ENCODE measurements at regions of chr6 and their contacts with region 1.

Region 1: GRCh38 chr6:130961148-130961547 is 101.9 kb downstream of the EPB41L2 start:
- DNase-seq: no peak
- ATAC-seq: no peak

Region 2: DNA sequence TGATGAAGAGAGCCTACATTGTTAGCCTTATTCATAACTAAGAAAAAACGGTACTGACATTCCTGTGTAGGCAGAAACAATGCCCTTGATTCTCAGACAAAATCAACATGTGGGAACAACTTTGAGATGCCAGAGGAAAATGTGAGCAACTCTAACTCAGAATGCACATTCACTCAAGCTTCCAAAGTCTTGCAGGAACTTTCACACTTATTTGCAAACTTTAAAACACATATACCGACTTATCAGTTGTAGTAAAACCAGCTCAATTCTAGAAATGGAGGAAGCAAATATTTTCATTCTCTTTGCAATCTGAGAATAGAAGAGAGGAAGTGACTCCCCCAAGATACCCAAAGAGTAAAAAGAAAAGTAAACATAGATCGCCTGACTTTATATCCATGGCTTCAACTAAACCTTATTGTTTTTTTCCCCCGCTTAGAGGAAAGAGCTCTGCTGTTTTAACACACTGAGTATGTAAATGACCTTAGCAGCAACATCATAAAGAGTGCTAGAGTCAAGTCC is 15.7 kb before region 1 on chr6:
- intact Hi-C with region 1: loop called (anchors 2 kb)
- DNase-seq: no peak
- ATAC-seq: no peak

Measured in Right ventricle myocardium inferior (tissue), 1 donor.